ENCODE measurements at regions of chr7 and their contacts with region 1.

Region 1: GRCh38 chr7:134126966-134127848 is at the start of gene LRGUK:
- DNase-seq: peak; percentile 68 to 74
- ATAC-seq: peak; percentile 99
- H3K4me3 ChIP-seq: peak within 1 kb of the TSS; percentile 70 to 84 (median 74)
- H3K27ac ChIP-seq: no peak within 1 kb of the TSS
- H3K4me1 ChIP-seq: peaks cover 4 to 5% of the 10 kb centered on the region in 2 donors
- H3K27me3 ChIP-seq: no peaks in the 10 kb centered on the region
- CTCF ChIP-seq: no peak
- POLR2A ChIP-seq: no peak
- total RNA-seq, gene LRGUK: 0.10 TPM in 1 of 4 donors, not detected in the others

Region 2: DNA sequence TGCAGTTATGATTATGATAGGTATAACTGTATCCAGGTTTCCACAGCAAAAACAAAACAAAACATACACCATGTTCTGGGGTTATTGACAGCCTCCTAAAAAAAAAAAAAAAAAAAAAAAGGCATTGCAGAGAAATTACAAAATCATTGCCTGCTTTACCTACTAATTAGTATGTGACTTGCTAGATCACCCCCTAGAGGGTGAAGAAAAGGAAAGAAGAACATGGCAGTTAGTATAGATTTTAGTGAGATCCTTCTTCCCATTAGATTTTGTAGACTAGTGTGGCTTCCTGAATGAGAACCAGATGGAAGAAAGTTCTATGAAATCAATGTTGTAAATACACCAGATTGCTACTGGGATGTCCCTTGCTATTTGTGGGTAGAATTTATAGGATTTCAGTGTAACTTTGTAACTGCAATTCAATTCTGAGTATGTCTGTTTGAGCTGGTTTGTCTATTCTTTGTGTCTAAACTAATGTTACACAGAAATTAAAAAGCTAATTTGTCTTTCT is 835.1 kb after region 1 on chr7:
- in situ Hi-C with region 1: no loop called
- intact Hi-C with region 1: no loop called
- DNase-seq: no peak
- ATAC-seq: no peak
- H3K4me3 ChIP-seq: no peak overlapping the region
- H3K27ac ChIP-seq: no peak overlapping the region
- H3K4me1 ChIP-seq: no peaks in the 10 kb centered on the region
- H3K27me3 ChIP-seq: no peaks in the 10 kb centered on the region
- CTCF ChIP-seq: no peak
- POLR2A ChIP-seq: no peak

Region 3: GRCh38 chr7:135238112-135238744 is 1111.0 kb after region 1 on chr7:
- in situ Hi-C with region 1: loop called in 1 of 4 experiments (anchors 25 kb)
- intact Hi-C with region 1: no loop called
- DNase-seq: no peak
- ATAC-seq: no peak
- H3K4me3 ChIP-seq: no peak overlapping the region
- H3K27ac ChIP-seq: no peak overlapping the region
- H3K4me1 ChIP-seq: no peaks in the 10 kb centered on the region
- H3K27me3 ChIP-seq: no peaks in the 10 kb centered on the region
- CTCF ChIP-seq: no peak
- POLR2A ChIP-seq: no peak

Measured in gastrocnemius medialis (tissue), 4 donors.